CD4-positive, alpha-beta memory T cell (primary cell): ENCODE measurements at regions of chr19 and their contacts with region 1.

Region 1: DNA sequence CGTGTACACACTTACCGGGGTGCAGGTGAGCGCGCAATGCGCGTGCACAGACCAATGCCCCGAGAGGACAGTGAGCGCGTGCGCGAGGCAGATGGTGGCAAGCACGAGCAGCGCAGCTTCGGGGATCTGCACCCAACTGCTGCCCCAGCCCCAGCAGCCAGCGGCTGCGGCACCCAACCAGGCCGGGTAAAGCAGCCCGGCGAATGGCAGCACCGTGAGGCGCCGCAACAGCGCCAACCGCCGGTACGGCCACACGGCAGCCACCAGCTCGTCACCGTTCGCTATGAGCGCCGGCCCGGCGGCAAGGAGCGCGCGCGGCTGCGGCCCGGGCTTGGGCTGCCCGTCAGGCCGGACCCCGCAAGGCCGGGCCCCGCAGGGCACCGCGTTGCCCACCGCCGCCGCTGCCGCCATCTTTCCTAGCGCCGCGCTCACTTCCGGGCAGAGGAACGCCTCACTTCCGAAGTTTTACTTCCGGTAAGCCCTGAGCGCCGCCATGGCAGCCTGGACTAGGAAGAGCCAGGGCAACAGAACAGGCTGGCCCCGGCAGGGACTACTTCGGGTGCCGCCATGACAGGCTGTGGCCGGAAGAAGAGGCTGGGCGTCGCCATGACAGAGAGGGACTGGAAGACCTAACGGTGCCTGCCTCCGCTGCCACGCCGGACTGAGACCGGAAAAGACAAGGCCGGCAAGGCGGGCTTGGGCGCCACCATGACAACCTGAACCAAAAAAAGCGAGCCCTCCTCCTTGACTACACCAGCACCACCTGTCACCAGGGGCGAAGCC is at the start of gene ATP13A1:
- DNase-seq: peak; percentile 95 to 98 (median 96)
- H3K4me3 ChIP-seq: peak within 1 kb of the TSS; percentile 78 to 89
- H3K4me3 Mint-ChIP-seq: peak within 1 kb of the TSS; percentile 92 to 96 (median 93)
- H3K27ac ChIP-seq: peak within 1 kb of the TSS; percentile 89
- H3K27ac Mint-ChIP-seq: peak within 1 kb of the TSS; percentile 95 to 99 (median 98)
- H3K4me1 ChIP-seq: peaks cover 58% of the 10 kb centered on the region
- H3K4me1 Mint-ChIP-seq: peaks cover 24 to 51% (median 38%) of the 10 kb centered on the region in 4 donors
- H3K27me3 ChIP-seq: no peaks in the 10 kb centered on the region
- H3K27me3 Mint-ChIP-seq: no peaks in the 10 kb centered on the region
- total RNA-seq, gene ATP13A1: 137 to 139 TPM

Region 2: DNA sequence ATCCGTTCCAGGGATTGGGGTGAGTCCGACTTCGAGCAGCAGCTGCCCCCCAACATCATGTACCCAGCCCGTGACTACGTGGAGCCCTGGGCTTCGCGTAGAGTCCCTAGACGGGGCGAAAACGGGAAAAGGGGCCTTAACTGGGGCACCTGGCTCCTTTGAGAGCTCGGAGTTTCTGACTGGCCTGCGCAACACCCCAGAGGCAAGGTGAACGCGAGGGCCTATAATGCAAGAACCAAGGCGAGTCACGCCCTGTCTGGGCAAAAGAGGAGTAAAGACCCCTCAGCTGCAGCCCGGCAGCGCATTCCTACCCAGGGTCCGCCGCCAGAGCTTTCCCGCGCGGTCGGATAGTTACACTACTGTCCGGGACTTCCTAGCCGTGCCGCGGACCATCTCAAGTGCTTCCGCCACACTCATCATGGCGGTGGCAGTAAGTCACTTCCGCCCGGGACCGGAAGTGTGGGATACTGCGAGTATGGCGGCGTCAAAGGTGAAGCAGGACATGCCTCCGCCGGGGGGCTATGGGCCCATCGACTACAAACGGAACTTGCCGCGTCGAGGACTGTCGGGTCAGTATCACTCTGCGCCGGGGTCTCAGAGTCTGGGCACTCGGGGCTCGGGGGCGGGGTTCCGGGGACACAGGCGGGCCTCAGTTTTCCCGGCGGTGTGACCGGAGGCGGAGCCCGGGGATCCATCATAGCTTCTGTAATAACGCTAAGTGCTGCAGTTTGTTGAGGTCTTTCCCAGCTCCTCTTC is 147.5 kb before region 1 on chr19 and contains the start of gene NDUFA13:
- CTCF ChIA-PET with region 1: no interaction called
- POLR2A ChIA-PET with region 1: interaction called, 16 read pairs
- intact Hi-C with region 1: no loop called
- DNase-seq: peak; percentile 91 to 95 (median 92)
- H3K4me3 ChIP-seq: peak within 1 kb of the TSS; percentile 88 to 90
- H3K4me3 Mint-ChIP-seq: peak within 1 kb of the TSS; percentile 93 to 99 (median 97)
- H3K27ac ChIP-seq: peak within 1 kb of the TSS; percentile 92
- H3K27ac Mint-ChIP-seq: peak within 1 kb of the TSS; percentile 94 to 98 (median 97)
- H3K4me1 ChIP-seq: peaks cover 35% of the 10 kb centered on the region
- H3K4me1 Mint-ChIP-seq: peaks cover 16 to 47% (median 29%) of the 10 kb centered on the region in 4 donors
- H3K27me3 ChIP-seq: no peaks in the 10 kb centered on the region
- H3K27me3 Mint-ChIP-seq: no peaks in the 10 kb centered on the region
- total RNA-seq, gene NDUFA13: 191 to 199 TPM

Region 3: DNA sequence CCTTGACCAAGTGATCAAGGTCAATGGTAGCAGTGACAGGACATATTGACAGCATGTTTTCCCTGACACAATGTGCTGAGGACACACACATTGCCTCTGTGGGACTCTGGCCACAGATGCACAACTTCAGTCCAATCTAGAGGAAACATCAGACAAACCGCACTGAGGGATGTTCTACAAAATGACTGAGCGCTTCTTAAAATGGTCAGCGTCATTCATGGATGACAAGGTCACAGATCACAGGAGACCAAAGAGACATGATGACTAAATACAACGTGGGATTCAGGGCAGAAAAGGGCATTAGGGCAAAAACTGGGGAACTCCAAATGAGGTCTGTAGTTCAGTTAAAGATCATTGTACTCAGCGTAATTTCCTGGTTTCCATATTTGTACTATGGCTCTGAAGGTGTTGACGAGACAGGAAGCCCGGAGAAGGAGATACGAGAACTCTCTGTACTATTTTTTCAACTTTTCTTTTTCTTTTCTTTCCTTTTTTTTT is 65.6 kb before region 1 on chr19:
- CTCF ChIA-PET with region 1: no interaction called
- POLR2A ChIA-PET with region 1: interaction called, 41 read pairs
- intact Hi-C with region 1: loop called (anchors 2 kb)
- DNase-seq: peak; percentile 85 to 93 (median 91)
- H3K4me3 ChIP-seq: no peak overlapping the region
- H3K4me3 Mint-ChIP-seq: peak overlapping the region; percentile 47 to 84 (median 79)
- H3K27ac ChIP-seq: peak overlapping the region; percentile 89
- H3K27ac Mint-ChIP-seq: peak overlapping the region; percentile 93 to 100 (median 98)
- H3K4me1 ChIP-seq: peaks cover 83% of the 10 kb centered on the region
- H3K4me1 Mint-ChIP-seq: peaks cover 48 to 84% (median 62%) of the 10 kb centered on the region in 4 donors
- H3K27me3 ChIP-seq: no peaks in the 10 kb centered on the region
- H3K27me3 Mint-ChIP-seq: no peaks in the 10 kb centered on the region

Region 4: DNA sequence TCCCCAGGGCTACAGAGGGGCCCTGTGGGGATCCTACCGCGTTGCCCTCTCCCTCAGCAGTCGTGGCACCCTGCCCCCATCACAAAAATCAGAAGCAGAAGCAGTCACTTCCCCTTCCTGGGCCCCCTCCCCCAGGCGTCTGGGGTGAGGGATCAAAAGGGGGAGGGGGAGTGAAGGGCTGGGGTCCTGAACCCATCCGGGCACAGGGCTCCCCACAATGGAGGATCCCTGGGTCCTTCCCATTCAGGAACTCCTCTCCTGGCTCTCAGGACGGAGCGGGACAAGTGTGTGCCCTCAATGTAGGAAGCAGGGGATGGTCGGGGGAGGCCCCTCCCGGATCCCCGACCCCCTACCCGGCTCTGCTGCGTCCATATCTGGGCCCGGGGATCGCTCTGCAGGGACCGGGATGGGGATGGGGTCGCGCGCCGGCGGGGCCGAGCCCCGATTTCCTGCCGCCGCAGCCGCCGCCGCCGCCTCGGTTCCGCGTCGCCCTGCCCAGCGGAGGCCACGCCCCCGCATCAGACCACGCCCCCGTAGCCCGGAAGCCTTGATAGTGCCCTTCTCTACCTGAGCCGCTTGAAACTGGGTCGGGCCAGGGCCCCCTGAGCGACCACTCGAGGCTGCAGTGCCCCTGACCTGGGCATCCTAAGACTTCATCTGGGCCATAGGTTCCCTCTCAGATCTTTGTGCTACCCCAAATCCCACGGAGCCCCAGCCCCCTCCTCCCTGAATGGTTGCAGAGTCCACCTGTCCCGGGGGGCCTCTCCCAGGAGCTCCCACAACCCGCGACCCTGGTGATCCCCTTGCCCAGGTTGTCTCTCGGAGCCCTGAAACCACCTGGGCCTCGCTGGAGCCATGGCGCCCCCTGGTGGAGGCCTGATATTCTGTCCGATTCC is 20.0 kb before region 1 on chr19 and contains the start of gene GMIP:
- CTCF ChIA-PET with region 1: interaction called, 12 read pairs
- POLR2A ChIA-PET with region 1: interaction called, 46 read pairs
- intact Hi-C with region 1: loop called (anchors 2 kb)
- DNase-seq: peak; percentile 86 to 89 (median 88)
- H3K4me3 ChIP-seq: peak within 1 kb of the TSS; percentile 96 to 97
- H3K4me3 Mint-ChIP-seq: peak within 1 kb of the TSS; percentile 90 to 99 (median 99)
- H3K27ac ChIP-seq: peak within 1 kb of the TSS; percentile 92
- H3K27ac Mint-ChIP-seq: peak within 1 kb of the TSS; percentile 96 to 99 (median 97)
- H3K4me1 ChIP-seq: peaks cover 22% of the 10 kb centered on the region
- H3K4me1 Mint-ChIP-seq: peaks cover 9 to 25% (median 15%) of the 10 kb centered on the region in 4 donors
- H3K27me3 ChIP-seq: no peaks in the 10 kb centered on the region
- H3K27me3 Mint-ChIP-seq: no peaks in the 10 kb centered on the region
- total RNA-seq, gene GMIP: 101 to 105 TPM

Region 5: DNA sequence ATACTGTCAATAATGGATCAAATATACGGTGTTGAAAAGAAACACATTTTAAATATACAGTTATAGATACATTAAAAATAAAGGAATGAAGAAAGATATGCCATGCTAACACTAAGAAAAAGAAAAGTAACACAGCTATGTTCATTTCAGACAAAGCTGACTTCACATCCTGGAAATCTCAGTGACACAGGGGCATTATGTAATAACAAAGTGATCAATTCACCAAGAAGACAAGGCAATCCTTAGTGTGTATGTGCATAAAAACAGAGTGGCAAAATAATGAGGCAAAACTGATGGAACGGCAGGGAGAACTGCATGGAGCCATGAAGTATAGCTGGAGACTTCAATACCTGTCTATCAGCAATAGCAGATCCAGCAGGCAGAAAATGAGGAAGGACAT is 56.4 kb after region 1 on chr19:
- CTCF ChIA-PET with region 1: no interaction called
- POLR2A ChIA-PET with region 1: interaction called, 15 read pairs
- intact Hi-C with region 1: no loop called
- DNase-seq: peak in 3 of 5 donors; percentile 24 to 42 (median 25)
- H3K4me3 ChIP-seq: no peak overlapping the region
- H3K4me3 Mint-ChIP-seq: peak overlapping the region in 4 of 8 donors; percentile 13 to 55 (median 50)
- H3K27ac ChIP-seq: no peak overlapping the region
- H3K27ac Mint-ChIP-seq: peak overlapping the region in 3 of 7 donors; percentile 19 to 43 (median 24)
- H3K4me1 ChIP-seq: no peaks in the 10 kb centered on the region
- H3K4me1 Mint-ChIP-seq: peaks cover 3 to 17% (median 6%) of the 10 kb centered on the region in 4 donors
- H3K27me3 ChIP-seq: no peaks in the 10 kb centered on the region
- H3K27me3 Mint-ChIP-seq: no peaks in the 10 kb centered on the region

Region 6: GRCh38 chr19:19860756-19861390 is 197.4 kb after region 1 on chr19:
- CTCF ChIA-PET with region 1: no interaction called
- POLR2A ChIA-PET with region 1: interaction called, 84 read pairs
- intact Hi-C with region 1: loop called (anchors 1 kb)
- DNase-seq: peak; percentile 50 to 77 (median 61)
- H3K4me3 ChIP-seq: no peak overlapping the region
- H3K4me3 Mint-ChIP-seq: peak overlapping the region; percentile 31 to 85 (median 54)
- H3K27ac ChIP-seq: no peak overlapping the region
- H3K27ac Mint-ChIP-seq: peak overlapping the region in 2 of 7 donors; percentile 53 to 86
- H3K4me1 ChIP-seq: no peaks in the 10 kb centered on the region
- H3K4me1 Mint-ChIP-seq: peaks cover 2 to 14% (median 8%) of the 10 kb centered on the region in 4 donors
- H3K27me3 ChIP-seq: no peaks in the 10 kb centered on the region
- H3K27me3 Mint-ChIP-seq: peaks cover 0 to 1% of the 10 kb centered on the region in 2 donors